ENCODE measurements at regions of chr20 and their contacts with region 1.

Region 1: GRCh38 chr20:38321959-38322598 is 18.1 kb downstream of the BPI start:
- DNase-seq: peak; percentile 29
- H3K4me3 ChIP-seq: no peak overlapping the region
- H3K27ac ChIP-seq: no peak overlapping the region
- H3K4me1 ChIP-seq: no peaks in the 10 kb centered on the region
- H3K27me3 ChIP-seq: no peaks in the 10 kb centered on the region
- CTCF ChIP-seq: peak; percentile 64 to 72

Region 2: DNA sequence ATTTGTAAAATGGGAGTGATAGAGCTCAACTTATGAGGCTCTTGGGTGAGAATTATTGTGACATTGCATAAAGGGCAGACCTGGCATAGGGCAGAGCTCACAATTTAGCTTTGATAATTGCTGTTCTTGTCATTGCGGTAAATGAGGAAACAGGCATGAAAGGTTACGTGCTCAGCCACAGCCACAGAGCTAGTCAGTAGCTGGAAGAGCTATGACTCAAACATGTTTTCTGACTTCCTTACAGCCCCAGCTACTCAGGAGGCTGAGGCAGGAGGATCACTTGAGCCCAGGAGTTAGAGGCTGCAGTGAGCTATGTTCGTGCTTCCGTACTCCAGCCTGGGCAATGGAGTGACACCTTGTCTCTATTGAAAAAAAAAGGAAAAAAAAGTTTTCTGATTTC is 1056.9 kb before region 1 on chr20:
- CTCF ChIA-PET with region 1: no interaction called
- dilution Hi-C with region 1: no loop called
- in situ Hi-C with region 1: no loop called
- intact Hi-C with region 1: loop called (anchors 10 kb)
- DNase-seq: no peak
- H3K4me3 ChIP-seq: no peak overlapping the region
- H3K27ac ChIP-seq: no peak overlapping the region
- H3K4me1 ChIP-seq: peaks cover 4% of the 10 kb centered on the region
- H3K27me3 ChIP-seq: peaks cover 3% of the 10 kb centered on the region
- CTCF ChIP-seq: no peak

Region 3: DNA sequence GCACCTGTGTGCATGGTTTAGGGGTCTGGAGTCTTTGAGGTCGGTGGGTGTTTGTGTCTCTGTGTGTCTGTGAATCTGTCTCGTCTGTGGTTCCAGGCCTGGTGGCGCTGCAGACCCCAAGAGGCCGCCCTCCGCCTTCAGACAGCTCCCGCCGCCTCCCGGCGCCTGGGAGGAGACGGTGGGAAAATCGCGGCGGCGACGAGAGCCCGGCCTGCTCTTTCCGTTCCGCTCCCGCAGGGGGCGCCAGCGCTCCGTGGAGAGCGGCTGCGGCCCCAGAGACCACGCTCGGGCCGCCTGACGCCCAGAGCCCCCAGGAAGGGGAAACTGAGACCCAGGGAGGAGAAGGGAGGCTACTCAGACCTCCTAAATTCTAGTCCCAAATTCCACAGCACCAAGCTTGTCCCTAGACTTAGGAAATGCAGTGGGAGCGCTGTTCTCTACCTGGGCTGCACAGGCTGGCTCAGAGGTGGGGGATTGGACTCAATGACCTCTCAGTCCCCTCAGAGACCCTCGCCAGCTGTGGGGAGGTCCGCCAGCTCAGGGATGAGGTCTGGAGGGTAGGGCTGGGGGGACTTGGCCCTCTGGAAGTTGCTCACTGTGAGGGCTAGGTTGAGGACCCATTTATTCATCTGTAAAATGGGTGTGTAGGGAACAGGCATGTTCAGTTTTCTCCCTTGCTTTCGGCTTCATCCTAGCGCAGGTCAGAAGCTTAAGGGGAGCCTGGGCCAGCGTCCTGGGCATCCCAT is 757.5 kb before region 1 on chr20:
- CTCF ChIA-PET with region 1: no interaction called
- dilution Hi-C with region 1: no loop called
- in situ Hi-C with region 1: loop called in 1 of 2 experiments (anchors 25 kb)
- intact Hi-C with region 1: loop called (anchors 2 kb)
- DNase-seq: peak; percentile 7
- H3K4me3 ChIP-seq: no peak overlapping the region
- H3K27ac ChIP-seq: no peak overlapping the region
- H3K4me1 ChIP-seq: no peaks in the 10 kb centered on the region
- H3K27me3 ChIP-seq: peaks cover 3% of the 10 kb centered on the region
- CTCF ChIP-seq: peak; percentile 57 to 96

Region 4: GRCh38 chr20:37864298-37864697 is 457.8 kb before region 1 on chr20:
- CTCF ChIA-PET with region 1: no interaction called
- dilution Hi-C with region 1: no loop called
- in situ Hi-C with region 1: no loop called
- intact Hi-C with region 1: no loop called
- DNase-seq: no peak
- H3K4me3 ChIP-seq: no peak overlapping the region
- H3K27ac ChIP-seq: no peak overlapping the region
- H3K4me1 ChIP-seq: no peaks in the 10 kb centered on the region
- H3K27me3 ChIP-seq: no peaks in the 10 kb centered on the region
- CTCF ChIP-seq: no peak

Region 5: DNA sequence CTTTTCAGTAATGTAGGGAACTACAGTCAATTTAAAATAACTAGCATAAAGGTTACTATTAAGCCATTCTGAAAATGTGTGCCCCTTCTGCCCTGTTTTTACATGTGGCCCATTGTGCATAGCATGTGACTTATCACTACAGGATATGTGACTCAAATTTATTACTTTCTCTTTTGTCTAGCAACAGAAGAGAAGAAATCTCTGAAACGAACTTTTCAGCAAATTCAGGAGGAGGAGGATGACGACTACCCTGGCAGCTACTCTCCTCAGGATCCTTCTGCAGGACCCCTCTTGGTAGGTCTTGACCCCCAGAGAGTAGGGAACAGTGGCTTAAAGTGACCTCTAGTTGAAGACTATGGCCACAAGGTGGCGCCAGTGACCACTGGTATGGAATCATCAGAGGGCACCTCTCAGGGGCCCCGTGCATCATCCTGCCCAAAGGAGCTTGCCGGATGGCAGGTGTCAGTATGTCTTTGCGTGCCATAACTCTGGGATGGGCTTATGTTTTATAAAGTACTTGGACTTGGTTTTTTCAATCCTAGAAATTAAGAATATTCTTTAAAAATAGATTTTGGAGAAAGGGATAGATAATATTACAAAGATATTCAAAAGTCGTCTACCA is 264.6 kb before region 1 on chr20:
- CTCF ChIA-PET with region 1: interaction called, 24 read pairs
- dilution Hi-C with region 1: no loop called
- in situ Hi-C with region 1: loop called in 1 of 2 experiments (anchors 25 kb)
- intact Hi-C with region 1: loop called (anchors 5 kb)
- DNase-seq: peak; percentile 53
- H3K4me3 ChIP-seq: no peak overlapping the region
- H3K27ac ChIP-seq: no peak overlapping the region
- H3K4me1 ChIP-seq: no peaks in the 10 kb centered on the region
- H3K27me3 ChIP-seq: no peaks in the 10 kb centered on the region
- CTCF ChIP-seq: peak; percentile 75 to 82

Region 6: DNA sequence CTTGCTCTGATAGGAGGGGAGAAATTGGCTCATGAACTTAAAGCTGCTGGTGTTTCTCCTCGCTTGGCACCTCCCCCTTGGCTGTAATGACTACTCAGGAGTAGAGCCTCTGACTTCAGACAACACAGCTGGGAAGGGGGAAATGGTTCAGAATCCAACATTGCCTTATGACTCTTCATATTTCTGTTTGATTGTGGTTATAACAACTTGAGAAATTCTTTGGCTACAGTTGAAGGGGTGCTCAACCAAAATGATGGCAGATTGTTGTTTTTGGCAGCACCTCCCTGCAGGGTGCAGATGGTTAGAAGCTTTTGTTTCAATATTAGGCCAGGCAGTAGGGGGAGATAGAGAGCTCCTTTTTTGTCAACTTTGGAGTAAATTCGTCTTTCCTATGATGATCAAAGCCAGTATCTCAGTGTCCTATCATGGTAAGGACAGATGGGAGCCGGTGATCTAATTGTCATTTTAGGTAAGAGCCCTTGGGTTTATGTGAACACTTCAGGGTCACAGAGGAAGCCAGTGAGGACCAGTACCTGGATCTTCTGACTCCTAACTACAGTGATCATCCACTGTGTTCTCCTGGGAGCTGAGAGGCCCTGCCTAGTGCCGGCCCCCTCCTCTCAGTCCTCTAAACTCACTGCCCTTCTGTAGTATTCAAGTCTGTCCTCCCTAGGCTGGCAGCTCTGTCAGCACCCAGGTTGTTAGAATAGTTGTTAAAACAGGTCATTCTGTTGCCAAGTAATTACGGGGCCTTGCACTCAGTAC is 248.6 kb before region 1 on chr20:
- CTCF ChIA-PET with region 1: no interaction called
- dilution Hi-C with region 1: no loop called
- in situ Hi-C with region 1: loop called in 1 of 2 experiments (anchors 25 kb)
- intact Hi-C with region 1: loop called (anchors 5 kb)
- DNase-seq: peak; percentile 78
- H3K4me3 ChIP-seq: no peak overlapping the region
- H3K27ac ChIP-seq: no peak overlapping the region
- H3K4me1 ChIP-seq: peaks cover 8% of the 10 kb centered on the region
- H3K27me3 ChIP-seq: no peaks in the 10 kb centered on the region
- CTCF ChIP-seq: peak; percentile 79 to 90

Region 7: DNA sequence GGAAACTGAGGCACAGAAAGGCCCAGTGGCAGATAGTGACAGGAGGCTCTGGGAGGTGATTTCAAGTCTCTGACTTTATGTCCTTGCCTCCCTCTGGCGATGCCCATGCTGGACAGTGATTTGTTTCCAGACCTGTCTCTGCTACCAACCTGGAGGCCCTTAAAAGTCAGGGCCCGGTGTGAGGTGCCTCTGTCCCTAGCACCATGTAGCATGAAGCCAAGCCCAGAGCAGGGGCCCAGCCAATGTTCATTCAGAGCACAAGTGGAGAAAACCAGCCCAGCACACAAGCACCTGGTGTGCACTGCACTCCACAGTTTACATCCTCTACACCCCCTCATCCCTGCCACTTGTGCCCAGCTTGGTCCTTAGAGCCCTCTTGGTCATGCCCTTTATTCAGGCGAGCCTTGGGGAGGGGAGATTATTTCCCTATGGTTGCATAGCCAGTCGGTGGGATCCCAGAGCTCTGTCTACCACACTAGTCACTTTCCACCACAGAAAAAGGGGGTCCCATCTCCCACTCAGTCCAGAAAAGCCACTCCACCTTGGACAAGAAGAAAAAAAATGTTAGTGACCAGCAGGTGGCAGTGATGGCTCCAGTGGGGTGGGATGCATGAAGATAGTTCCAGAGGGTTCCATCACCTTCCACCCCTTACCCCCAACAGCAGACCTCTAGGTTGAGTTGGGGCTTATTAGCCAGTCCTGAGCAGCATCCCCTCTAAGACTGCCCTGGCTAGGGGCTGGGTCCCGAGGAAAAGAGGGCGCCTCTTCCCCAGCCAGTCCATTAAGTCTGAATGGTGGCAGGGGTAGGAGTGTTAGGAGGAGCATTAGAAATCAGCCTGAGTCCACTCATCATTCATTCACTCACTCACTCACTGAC is 92.5 kb before region 1 on chr20:
- CTCF ChIA-PET with region 1: no interaction called
- dilution Hi-C with region 1: loop called (anchors 5 kb)
- in situ Hi-C with region 1: no loop called
- intact Hi-C with region 1: loop called (anchors 1 kb)
- DNase-seq: no peak
- H3K4me3 ChIP-seq: no peak overlapping the region
- H3K27ac ChIP-seq: no peak overlapping the region
- H3K4me1 ChIP-seq: peaks cover 9% of the 10 kb centered on the region
- H3K27me3 ChIP-seq: no peaks in the 10 kb centered on the region
- CTCF ChIP-seq: peak; percentile 53 to 65